T47D (cell line): ENCODE measurements at regions of chr11 and their contacts with region 1.

Region 1: GRCh38 chr11:63933459-63933858 is 5.3 kb upstream of the NAA40 start:
- DNase-seq: no peak

Region 2: GRCh38 chr11:63838678-63839507 is 94.6 kb before region 1 on chr11 and contains the start of gene MARK2:
- in situ Hi-C with region 1: loop called (anchors 5 kb)
- DNase-seq: peak; percentile 89 to 99

Region 3: GRCh38 chr11:64358907-64359711 is 425.6 kb after region 1 on chr11 and contains the start of gene RPS6KA4:
- in situ Hi-C with region 1: no loop called
- DNase-seq: peak; percentile 73 to 96

Region 4: GRCh38 chr11:64500176-64501013 is 566.9 kb after region 1 on chr11:
- in situ Hi-C with region 1: no loop called
- DNase-seq: peak in 1 of 2 experiments; percentile 51